ENCODE measurements at regions of chr22 and their contacts with region 1.

Region 1: DNA sequence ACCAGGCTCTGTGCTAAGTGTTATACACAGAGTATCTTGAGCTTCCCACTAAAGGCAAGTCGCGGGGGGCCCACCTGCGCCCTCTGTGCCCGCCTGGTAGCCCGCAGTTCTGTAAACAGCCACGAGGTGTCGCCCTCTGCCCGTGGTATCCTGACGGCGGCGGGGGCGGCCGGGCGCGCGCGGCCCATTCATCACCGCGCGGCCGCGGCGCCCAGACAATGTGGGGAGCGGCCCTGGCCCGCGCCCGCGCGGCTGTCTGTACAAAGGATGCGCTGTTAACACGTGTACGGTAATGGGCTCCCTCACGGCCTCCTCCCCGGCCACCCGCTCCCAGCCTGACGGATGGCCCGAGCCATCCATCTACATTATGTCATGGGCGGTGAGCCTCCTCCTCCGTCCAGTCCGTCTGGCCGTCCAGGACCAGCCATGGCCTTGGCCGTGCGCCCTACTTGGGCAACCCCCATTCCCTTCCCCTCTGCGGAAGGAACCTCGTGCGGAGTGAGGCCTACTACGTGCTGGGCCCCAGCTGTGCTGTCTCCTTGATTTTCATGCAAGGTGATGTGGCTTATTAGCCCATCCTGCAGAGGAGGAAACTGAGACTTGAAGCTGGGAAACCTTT is 99.4 kb downstream of the MIAT start:
- DNase-seq: peak; percentile 28
- H3K4me3 Mint-ChIP-seq: no peak overlapping the region
- H3K27ac Mint-ChIP-seq: no peak overlapping the region
- H3K4me1 Mint-ChIP-seq: no peaks in the 10 kb centered on the region
- H3K27me3 Mint-ChIP-seq: peaks cover 1% of the 10 kb centered on the region

Region 2: DNA sequence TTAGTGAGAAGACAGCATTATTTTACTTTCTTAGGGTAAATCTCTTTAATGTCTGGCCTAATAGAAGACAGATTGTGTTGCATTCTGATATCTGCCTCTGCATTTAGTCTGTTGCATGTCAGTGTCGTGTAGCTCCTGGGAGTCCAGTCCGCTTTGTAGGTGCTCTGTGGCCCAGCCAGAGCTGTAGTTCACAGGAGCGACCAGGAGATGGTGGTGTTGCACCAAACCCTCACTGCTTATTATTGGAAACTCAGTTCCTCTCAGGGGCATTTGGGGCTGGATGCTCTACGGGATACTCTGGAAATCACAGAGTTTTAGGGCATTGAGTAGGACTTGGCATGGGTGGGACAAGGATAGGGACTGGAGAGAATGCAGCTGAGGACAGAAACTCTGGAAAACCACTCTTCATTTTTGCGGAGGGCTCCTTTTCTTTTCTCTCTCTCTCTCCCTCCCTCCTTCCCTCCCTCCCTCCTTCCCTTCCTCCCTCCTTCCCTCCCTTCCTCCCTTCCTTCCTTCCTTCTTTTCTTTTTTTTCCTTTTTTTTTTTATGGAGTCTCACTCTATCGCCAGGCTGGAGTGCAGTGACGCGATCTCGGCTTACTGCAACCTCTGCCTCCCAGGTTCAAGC is 77.7 kb before region 1 on chr22:
- intact Hi-C with region 1: loop called (anchors 2 kb)
- DNase-seq: peak; percentile 62
- H3K4me3 Mint-ChIP-seq: no peak overlapping the region
- H3K27ac Mint-ChIP-seq: peak overlapping the region; percentile 62
- H3K4me1 Mint-ChIP-seq: peaks cover 35% of the 10 kb centered on the region
- H3K27me3 Mint-ChIP-seq: no peaks in the 10 kb centered on the region

Region 3: DNA sequence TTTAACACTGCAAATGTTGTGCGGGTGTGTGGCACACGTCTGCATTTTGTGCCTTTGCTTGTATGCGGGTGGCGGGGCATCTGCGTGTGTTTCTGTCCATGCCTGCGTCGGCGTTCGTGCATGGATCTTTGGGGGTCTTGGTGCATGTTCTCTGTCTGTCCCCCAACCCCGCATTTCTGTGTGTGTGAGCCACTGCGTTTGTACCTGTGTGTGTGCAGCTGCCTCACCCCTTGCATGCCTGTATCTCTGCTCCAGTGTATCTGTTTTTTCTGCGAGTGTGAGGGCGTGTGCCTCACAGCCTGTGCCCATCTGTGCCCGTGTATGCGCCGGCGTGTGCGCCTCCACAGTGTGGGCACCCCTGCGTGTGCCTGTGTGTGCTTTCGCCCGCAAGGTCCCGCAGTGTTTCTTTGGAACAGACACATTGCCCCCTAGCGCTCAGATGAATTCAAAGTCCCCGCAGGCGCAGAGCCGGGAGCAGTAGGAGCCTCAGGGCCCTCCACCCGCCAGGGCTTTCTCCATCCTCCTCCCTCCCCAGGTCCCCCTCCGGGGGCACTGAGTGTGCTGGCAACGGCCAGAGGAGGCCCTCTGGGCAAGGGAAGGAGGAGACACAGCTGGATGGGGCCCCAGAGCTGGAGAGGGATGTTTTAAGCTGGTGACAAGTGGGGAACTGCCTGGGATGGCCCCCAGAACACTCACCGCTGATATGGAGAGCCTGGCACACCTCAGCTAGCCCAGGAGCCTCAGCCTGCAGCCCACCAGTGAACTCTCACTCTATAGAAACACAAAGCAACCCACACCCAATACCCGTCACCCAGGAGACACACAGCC is 1047.9 kb after region 1 on chr22:
- intact Hi-C with region 1: loop called (anchors 2 kb)
- DNase-seq: peak; percentile 14
- H3K4me3 Mint-ChIP-seq: peak overlapping the region; percentile 53
- H3K27ac Mint-ChIP-seq: no peak overlapping the region
- H3K4me1 Mint-ChIP-seq: peaks cover 13% of the 10 kb centered on the region
- H3K27me3 Mint-ChIP-seq: peaks cover 38% of the 10 kb centered on the region